Common myeloid progenitor, CD34-positive (primary cell): ENCODE measurements at regions of chr10 and their contacts with region 1.

Region 1: DNA sequence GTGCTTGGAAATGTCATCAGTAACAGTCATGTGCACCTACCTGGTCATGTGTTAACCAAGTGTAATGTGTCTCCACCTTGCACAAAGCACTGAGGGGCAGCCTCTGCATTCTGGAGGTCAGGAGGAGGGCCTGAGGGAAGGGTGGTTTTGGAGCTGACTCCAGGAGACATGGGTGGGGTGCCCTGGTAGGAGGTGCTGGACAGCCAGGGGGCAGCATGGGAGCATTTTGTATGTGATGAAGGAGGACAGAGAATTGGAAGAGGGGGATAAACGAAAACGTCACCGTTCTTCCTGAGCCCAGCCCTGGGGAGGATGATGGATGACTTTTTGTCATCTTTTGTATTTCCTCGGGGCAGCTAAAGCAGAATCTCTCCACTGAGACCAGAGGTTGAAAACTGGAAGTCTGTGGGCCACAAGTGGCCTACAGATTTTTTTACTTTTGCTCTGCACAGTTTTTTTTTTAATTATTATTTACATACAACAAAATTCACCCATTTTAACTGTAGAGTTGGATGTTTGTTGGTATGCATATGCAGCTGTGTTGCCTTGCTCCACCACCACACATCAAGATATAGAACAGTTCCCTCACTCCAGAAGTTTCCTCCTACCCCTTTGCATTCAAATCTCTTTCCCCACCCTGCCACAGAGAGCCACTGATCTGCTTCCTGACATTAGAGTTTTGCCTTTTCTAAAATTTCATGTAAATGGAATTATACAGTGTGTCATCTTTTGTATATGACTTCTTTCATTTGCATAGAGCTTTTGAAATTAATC is 242.5 kb downstream of the VTI1A start:
- DNase-seq: peak; percentile 34 to 57 (median 47)
- H3K4me3 ChIP-seq: no peak overlapping the region
- H3K27ac ChIP-seq: no peak overlapping the region
- H3K4me1 ChIP-seq: peaks cover 0 to 4% (median 0%) of the 10 kb centered on the region in 4 experiments
- H3K27me3 ChIP-seq: no peaks in the 10 kb centered on the region

Region 2: DNA sequence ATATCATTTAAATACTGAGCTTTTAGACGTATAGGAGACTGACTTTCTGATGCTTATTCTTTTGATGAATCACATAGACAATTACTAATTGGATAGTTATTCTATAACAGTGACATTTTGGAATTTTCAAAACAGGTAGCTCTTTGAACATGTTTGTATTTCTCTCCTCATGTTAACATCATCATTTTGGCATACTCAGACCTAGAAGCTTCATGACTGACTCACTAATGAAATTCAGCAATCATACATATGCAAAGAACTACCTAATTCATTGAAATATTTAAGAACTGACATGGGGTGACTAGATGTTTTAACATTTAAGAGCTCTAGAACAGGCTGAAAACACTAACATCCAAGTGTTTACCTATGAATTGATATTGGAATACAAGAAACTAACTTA is 50.2 kb before region 1 on chr10:
- CTCF ChIA-PET with region 1: no interaction called
- POLR2A ChIA-PET with region 1: no interaction called
- DNase-seq: no peak
- H3K4me3 ChIP-seq: no peak overlapping the region
- H3K27ac ChIP-seq: no peak overlapping the region
- H3K4me1 ChIP-seq: peaks cover 0 to 2% (median under 1%) of the 10 kb centered on the region in 4 experiments
- H3K27me3 ChIP-seq: no peaks in the 10 kb centered on the region

Region 3: DNA sequence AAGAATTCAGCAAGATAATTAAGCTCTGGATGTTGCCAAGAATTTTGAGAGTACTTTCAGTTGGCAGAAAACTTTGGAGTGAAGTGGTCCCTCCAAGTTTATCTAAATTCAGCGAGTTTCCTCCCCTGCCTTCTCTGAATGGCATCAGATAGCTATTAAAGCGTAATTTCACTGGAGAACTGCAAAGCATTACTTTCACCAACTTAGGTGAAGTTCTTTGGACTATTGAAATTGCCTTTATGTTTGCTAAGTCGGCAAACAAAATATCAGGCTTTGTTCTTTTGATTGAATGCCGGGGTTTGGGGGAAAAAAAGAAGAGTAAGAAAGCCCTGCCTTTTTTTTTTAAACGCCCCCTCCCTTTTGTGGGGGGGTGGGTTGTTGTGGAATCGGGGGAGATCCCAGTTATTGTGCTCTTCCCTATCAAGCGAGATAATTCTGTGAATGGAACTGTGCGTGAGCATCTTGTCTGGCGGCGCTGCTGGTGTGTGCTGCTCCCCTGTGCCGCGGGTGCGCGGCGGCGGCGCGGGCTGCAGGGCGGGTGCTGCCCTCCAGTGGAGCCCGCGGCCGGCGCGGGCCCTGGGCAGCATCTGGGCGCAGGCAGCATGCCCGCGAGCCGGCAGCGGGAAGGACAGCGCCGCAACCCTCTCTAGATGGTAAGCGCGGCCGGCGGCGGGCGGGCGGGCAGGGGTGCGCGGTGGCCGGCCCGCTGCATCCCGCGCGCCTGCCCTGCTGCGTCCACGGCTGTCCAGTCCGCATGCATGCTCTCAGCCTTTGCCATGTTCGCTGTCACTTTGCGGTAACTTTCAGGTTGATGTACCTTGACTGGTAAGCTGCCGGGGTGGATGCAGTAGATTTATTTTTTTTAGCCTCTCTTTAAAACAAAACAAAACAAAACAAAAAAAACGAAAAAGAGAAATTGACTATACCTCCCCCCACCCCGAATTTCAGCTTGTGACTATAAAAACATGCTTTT is 437.0 kb after region 1 on chr10:
- CTCF ChIA-PET with region 1: interaction called, 11 read pairs
- POLR2A ChIA-PET with region 1: no interaction called
- DNase-seq: peak; percentile 65 to 81 (median 78)
- H3K4me3 ChIP-seq: peak overlapping the region in 4 of 7 experiments; percentile 40 to 71 (median 58)
- H3K27ac ChIP-seq: no peak overlapping the region
- H3K4me1 ChIP-seq: peaks cover 0 to 6% (median 3%) of the 10 kb centered on the region in 4 experiments
- H3K27me3 ChIP-seq: no peaks in the 10 kb centered on the region